Left ventricle myocardium superior (tissue), 1 donor: ENCODE measurements at regions of chr1 and their contacts with region 1.

Region 1: GRCh38 chr1:65209005-65209885 is 61.2 kb downstream of the AK4 start:
- DNase-seq: no peak
- ATAC-seq: peak; percentile 72

Region 2: DNA sequence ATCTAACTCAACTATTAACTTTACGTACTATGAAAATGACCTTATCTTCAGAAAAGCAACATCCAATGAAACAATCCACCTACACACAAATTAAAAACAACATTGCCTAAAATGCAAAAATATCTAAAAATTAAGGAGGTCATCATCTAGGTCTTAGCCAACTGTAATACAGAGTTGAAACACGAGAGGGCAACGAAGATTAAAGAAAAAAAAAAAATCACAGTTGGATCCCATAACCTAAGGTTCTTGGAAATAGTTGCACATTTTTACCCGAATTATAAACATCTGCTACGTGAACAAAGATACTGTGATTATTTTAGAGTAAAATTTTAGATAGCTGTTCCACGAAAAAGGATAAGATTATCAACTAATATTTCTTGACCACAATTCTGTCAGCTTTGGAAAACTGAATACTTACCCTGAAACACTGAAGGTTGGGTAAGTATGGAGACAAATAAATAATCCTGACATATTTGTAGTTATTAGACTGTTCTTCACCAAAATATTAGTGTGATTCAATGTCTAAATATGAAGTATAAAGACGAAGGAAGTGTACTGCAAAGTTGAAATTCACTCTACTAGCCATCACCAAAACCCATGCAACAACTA is 149.2 kb before region 1 on chr1:
- intact Hi-C with region 1: loop called (anchors 5 kb)
- DNase-seq: no peak
- ATAC-seq: peak; percentile 21